Mammary epithelial cell (primary cell): ENCODE measurements at regions of chr6 and their contacts with region 1.

Region 1: GRCh38 chr6:54846243-54846856 is at the start of gene FAM83B:
- DNase-seq: peak; percentile 98
- H3K4me3 ChIP-seq: peak within 1 kb of the TSS; percentile 70 to 84 (median 82)
- H3K27ac ChIP-seq: peak within 1 kb of the TSS; percentile 99
- H3K4me1 ChIP-seq: peaks cover 27% of the 10 kb centered on the region
- H3K27me3 ChIP-seq: no peaks in the 10 kb centered on the region
- CTCF ChIP-seq: peak in 1 of 2 donors; percentile 8
- total RNA-seq, gene FAM83B: 52.2 to 101 TPM

Region 2: DNA sequence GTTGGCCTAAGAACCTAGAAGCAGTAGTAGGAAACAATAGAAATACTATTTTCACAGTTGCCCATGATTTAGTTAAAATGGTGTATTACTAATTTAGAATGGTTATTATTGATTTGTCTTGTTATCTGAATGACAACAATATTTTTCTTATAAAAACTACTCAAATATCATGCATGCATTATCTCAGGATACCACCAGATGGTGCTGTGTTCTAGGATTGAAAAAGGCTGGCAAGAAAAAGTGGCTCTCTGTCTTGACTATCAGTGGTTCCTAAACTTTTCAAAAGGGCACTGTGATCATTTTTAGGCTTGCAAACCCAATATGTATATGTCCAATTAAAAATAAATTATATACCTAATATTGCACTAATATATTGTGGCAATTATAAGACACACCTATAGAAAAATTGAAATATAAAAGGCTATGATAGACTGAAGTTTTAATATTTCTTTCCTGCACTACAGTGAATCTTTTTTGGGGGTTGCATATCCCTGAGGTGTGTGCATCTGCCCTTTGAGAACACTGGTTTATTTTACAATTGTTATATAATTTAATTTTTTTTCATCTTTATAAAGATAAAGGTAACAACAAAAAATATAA is 866.8 kb before region 1 on chr6:
- CTCF ChIA-PET with region 1: no interaction called
- dilution Hi-C with region 1: no loop called
- in situ Hi-C with region 1: no loop called
- intact Hi-C with region 1: loop called (anchors 5 kb)
- DNase-seq: no peak
- H3K4me3 ChIP-seq: no peak overlapping the region
- H3K27ac ChIP-seq: no peak overlapping the region
- H3K4me1 ChIP-seq: peaks cover 21% of the 10 kb centered on the region
- H3K27me3 ChIP-seq: no peaks in the 10 kb centered on the region
- CTCF ChIP-seq: peak; percentile 79

Region 3: GRCh38 chr6:54717849-54718455 is 128.4 kb before region 1 on chr6:
- CTCF ChIA-PET with region 1: no interaction called
- dilution Hi-C with region 1: no loop called
- in situ Hi-C with region 1: loop called in 1 of 2 experiments (anchors 5 kb)
- intact Hi-C with region 1: loop called (anchors 1 kb)
- DNase-seq: peak; percentile 81
- H3K4me3 ChIP-seq: peak overlapping the region in 2 of 3 experiments; percentile 37 to 43
- H3K27ac ChIP-seq: peak overlapping the region; percentile 91
- H3K4me1 ChIP-seq: peaks cover 22% of the 10 kb centered on the region
- H3K27me3 ChIP-seq: no peaks in the 10 kb centered on the region
- CTCF ChIP-seq: peak; percentile 82 to 85

Region 4: DNA sequence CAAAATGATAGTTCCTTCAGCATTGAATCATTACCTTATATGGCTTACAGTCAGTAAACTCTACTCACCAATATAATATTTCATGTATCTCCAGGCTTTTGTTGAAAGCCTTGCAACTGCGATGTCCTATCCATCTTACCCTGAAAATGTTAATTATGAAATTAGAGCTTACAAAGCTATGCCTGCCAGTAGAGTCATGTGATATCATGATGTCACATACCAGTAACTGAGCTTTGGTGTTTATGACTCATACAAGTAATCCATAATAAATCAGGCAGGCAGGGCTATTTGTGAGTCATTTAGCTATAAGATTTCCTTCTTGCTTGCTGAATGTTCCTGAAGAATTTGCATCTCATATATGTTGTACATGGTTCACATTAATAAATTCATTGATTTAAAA is 44.7 kb before region 1 on chr6:
- CTCF ChIA-PET with region 1: no interaction called
- dilution Hi-C with region 1: no loop called
- in situ Hi-C with region 1: no loop called
- intact Hi-C with region 1: loop called (anchors 1 kb)
- DNase-seq: peak; percentile 76
- H3K4me3 ChIP-seq: no peak overlapping the region
- H3K27ac ChIP-seq: no peak overlapping the region
- H3K4me1 ChIP-seq: peaks cover 15% of the 10 kb centered on the region
- H3K27me3 ChIP-seq: no peaks in the 10 kb centered on the region
- CTCF ChIP-seq: no peak

Region 5: DNA sequence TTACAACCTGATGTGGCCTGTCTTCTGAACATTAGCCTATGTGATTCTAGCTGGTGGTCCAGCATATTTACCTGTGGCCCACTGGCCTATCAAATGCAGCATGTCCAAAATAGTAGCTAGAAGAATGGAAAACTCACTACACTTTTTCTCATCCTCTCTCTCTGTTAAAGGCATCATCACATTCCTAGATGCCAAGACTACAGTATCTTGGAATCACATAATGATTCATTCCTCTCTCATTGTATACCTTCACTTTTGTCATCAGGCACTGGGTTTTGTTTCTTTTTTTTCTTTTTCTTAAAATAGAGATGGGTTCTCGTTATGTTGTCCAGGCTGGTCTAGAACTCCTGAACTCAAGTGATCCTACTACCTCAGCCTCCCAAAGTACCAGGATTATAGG is 45.2 kb after region 1 on chr6:
- CTCF ChIA-PET with region 1: no interaction called
- dilution Hi-C with region 1: no loop called
- in situ Hi-C with region 1: no loop called
- intact Hi-C with region 1: loop called (anchors 1 kb)
- DNase-seq: peak; percentile 58
- H3K4me3 ChIP-seq: no peak overlapping the region
- H3K27ac ChIP-seq: peak overlapping the region; percentile 65
- H3K4me1 ChIP-seq: peaks cover 18% of the 10 kb centered on the region
- H3K27me3 ChIP-seq: no peaks in the 10 kb centered on the region
- CTCF ChIP-seq: no peak

Region 6: DNA sequence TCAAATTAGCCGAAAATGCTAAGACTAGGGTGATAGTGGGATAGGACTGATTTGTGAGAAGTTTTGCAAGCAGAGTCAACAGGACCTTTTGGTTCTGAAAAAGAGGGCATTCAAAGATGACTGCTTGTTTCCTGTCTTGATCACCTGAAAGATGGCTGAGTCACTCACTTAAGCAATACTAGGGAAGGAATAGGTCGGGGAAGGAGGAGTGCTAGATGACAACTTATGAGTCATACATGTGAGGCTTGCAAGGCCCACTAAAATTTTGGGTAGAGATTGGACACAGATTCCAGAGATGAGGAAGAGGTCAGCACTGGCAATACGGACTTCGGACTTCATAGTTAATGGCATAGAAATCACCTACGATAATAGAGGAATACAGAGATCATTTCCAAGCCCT is 89.4 kb after region 1 on chr6:
- CTCF ChIA-PET with region 1: no interaction called
- dilution Hi-C with region 1: no loop called
- in situ Hi-C with region 1: no loop called
- intact Hi-C with region 1: loop called (anchors 1 kb)
- DNase-seq: peak; percentile 97
- H3K4me3 ChIP-seq: no peak overlapping the region
- H3K27ac ChIP-seq: peak overlapping the region; percentile 90
- H3K4me1 ChIP-seq: peaks cover 18% of the 10 kb centered on the region
- H3K27me3 ChIP-seq: no peaks in the 10 kb centered on the region
- CTCF ChIP-seq: no peak

Region 7: DNA sequence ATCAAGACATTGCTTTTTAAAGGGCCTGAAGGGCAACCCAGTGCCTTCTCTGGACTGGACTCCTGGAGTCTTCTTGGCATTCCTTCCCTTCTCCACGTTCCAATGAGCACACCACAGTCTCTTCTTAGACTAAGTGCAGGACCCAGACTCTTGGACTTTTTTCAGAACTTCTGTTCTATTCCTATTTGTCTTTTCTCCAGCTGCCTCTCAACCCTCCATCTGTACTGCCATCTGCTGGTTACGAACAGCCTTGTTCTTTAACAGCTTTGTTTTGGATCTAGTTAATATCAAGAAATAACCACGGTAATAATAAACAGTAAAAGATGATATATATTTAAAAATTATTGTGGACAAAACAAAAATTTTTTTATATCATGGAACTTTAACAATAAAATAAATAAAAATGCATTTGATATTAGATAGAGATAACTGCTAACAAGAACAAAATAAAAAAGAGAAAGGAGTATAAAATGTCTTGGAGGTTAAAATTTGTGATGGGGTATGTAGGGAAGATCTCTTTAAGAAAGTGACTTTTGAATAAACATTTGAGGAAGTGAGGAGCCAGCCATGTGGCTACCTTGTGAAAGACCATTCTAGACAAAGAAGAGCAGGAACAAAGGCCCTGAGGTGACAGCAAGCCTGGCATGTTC is 222.9 kb after region 1 on chr6:
- CTCF ChIA-PET with region 1: no interaction called
- dilution Hi-C with region 1: no loop called
- in situ Hi-C with region 1: no loop called
- intact Hi-C with region 1: loop called (anchors 1 kb)
- DNase-seq: peak; percentile 39
- H3K4me3 ChIP-seq: no peak overlapping the region
- H3K27ac ChIP-seq: no peak overlapping the region
- H3K4me1 ChIP-seq: no peaks in the 10 kb centered on the region
- H3K27me3 ChIP-seq: no peaks in the 10 kb centered on the region
- CTCF ChIP-seq: peak; percentile 76 to 80